ENCODE measurements at regions of chr12 and their contacts with region 1.

Region 1: DNA sequence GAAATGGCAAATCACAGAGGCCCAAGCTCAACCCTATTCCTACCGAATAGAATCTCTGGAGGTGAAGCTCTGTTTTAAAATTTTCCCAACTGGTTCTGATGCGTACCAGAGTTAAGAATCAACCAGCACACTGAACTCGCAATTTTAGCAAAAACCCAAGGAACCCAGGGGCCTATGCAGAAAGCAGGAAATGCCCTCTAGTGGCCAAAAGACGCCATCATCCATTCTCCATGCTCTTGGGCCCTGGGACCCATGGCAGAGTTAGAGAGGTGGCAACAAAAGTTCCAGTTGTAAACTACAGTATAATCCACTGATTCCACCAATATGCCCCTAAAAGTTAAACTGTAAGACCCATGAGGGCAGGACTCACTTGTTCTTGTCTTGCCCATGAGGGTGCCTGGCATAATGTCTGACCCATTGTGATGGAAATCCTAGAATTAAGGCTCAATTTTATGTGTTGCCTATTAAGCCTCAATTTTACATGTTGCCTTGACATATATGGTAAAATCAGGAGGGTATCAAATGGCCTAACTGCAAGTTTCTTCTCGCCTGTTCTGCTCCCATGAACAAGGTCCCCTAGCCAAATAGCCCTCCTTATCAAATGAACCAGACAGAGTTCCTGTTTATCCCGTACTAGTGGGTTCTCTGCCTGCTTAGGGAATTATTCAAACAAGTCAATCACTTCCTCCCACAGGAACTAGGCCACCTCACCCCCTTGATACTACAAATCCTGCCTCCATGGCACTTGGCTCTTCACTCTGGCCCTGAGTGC is 137.5 kb upstream of the CPM start:
- DNase-seq: peak; percentile 45
- ATAC-seq: peak; percentile 71 to 82

Region 2: GRCh38 chr12:68866950-68867349 is 203.6 kb before region 1 on chr12:
- intact Hi-C with region 1: loop called (anchors 5 kb)
- DNase-seq: no peak
- ATAC-seq: no peak

Region 3: DNA sequence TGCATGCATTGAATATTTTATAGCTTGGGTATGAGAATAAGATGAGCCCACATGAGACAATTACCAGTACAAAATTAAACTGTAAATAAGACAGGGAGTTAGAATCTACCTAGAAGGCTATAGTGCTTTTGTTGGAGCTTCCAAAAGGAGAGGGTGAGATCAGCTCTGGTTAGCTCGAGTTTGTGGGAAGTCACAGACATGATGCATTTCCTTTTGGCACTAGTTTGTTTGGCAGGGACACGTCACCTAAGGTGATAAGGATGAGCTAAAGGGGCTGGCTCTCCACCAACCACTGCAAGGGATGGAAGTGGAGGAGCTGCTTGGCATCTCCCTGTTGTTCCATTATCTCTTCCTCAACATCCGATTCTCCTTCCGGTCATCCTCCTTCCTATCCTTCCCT is 89.0 kb before region 1 on chr12:
- intact Hi-C with region 1: no loop called
- DNase-seq: no peak
- ATAC-seq: peak in 1 of 2 donors; percentile 41

Region 4: DNA sequence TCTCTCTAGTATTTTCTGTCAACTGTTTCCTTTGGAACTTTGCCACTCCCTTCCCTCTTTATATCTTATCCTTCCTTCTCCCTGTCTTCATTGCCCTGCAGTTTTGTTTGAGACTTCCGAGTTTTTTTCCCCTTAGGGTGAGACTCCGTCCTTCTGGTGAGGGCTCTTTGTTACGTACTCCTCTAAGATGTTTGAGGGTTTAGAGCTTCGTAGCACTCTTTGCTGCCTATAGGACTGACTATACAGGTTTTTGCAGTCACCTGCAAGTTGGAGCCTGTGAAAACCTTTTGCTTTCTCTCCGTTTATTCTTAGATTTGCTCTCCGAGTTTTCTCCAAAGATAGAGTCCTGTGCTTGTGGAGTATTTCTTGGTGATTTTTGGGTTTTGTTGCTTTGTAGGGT is 712.9 kb after region 1 on chr12:
- intact Hi-C with region 1: no loop called
- DNase-seq: no peak
- ATAC-seq: no peak